Posterior cingulate gyrus (tissue), 11 donors: ENCODE measurements at regions of chr13 and their contacts with region 1.

Region 1: DNA sequence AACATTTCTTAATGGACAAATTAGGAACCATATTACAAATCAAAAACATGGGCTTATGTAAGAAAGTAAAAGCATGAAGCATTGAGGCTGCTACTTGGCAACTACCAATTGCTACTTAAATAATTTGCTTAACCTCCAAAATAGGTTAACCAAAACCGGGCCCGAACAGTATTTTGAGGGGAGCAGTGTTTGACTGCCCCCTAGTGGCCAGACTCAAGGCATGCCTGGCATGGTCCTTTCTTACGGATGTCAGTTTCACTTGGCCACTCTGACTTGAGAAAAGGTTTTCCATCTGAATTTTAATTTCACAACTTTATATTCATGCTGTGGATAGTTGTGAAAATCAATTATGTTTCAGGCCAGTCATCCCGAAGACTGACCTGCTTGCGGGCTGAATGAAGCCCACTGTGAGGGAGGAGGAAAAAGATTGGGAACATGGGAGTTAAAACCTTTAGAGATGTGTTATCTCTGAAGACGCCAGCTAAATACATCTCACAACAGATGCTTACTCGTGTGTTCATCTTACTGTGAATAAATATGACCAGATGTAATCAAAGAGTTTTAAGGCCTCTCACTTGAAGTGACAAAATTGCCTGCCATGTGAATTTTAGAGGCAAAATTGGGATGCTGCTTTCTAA is 2.9 kb downstream of the RXFP2 start:
- DNase-seq: peak in 9 of 10 donors; percentile 28 to 93 (median 65)

Region 2: GRCh38 chr13:31175847-31176532 is 566.2 kb before region 1 on chr13:
- intact Hi-C with region 1: loop called (anchors 10 kb)
- DNase-seq: no peak

Region 3: GRCh38 chr13:31236211-31236786 is 505.9 kb before region 1 on chr13:
- intact Hi-C with region 1: loop called (anchors 5 kb)
- DNase-seq: no peak

Region 4: GRCh38 chr13:31431722-31432137 is 310.5 kb before region 1 on chr13:
- intact Hi-C with region 1: loop called (anchors 5 kb)
- DNase-seq: peak in 6 of 10 donors; percentile 14 to 80 (median 39)